ENCODE measurements at regions of chr3 and their contacts with region 1.

Region 1: GRCh38 chr3:100040451-100041225 is 73.7 kb downstream of the FILIP1L start:
- DNase-seq: peak in 1 of 2 donors; percentile 57
- ATAC-seq: peak; percentile 40 to 96 (median 84)
- H3K4me3 ChIP-seq: no peak overlapping the region
- H3K27ac ChIP-seq: peak overlapping the region; percentile 81 to 91 (median 86)
- H3K4me1 ChIP-seq: peaks cover 11 to 58% (median 38%) of the 10 kb centered on the region in 9 donors
- H3K27me3 ChIP-seq: no peaks in the 10 kb centered on the region
- CTCF ChIP-seq: no peak

Region 2: GRCh38 chr3:99938270-99938911 is 102.2 kb before region 1 on chr3:
- intact Hi-C with region 1: loop called in 3 of 10 experiments (anchors 5 to 10 kb)
- DNase-seq: no peak
- ATAC-seq: peak in 1 of 8 donors; percentile 28
- H3K4me3 ChIP-seq: no peak overlapping the region
- H3K27ac ChIP-seq: peak overlapping the region in 7 of 10 donors; percentile 4 to 70 (median 42)
- H3K4me1 ChIP-seq: peaks cover 0 to 62% (median 42%) of the 10 kb centered on the region in 9 donors
- H3K27me3 ChIP-seq: no peaks in the 10 kb centered on the region
- CTCF ChIP-seq: no peak

Region 3: DNA sequence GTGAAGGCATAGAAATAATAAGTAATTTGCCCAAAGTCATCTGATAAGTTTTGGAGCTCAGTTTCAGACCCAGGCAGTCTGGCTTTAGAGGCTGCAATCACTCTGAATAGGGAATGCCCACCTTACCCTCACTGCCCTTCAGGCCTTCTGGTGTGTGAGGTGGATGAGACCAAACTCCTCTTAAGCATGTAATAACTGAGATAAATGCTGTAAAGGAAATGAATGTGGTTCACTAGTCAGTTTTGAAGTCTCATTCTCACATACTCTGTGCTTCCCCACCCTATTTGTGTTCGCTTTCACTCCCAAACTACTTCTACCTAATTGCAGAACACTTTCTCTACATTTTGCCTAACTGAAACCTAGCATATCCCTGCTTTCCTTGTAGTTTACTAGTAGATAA is 70.4 kb before region 1 on chr3:
- intact Hi-C with region 1: no loop called
- DNase-seq: no peak
- ATAC-seq: no peak
- H3K4me3 ChIP-seq: no peak overlapping the region
- H3K27ac ChIP-seq: no peak overlapping the region
- H3K4me1 ChIP-seq: peaks cover 0 to 25% (median 16%) of the 10 kb centered on the region in 9 donors
- H3K27me3 ChIP-seq: no peaks in the 10 kb centered on the region
- CTCF ChIP-seq: no peak

Region 4: DNA sequence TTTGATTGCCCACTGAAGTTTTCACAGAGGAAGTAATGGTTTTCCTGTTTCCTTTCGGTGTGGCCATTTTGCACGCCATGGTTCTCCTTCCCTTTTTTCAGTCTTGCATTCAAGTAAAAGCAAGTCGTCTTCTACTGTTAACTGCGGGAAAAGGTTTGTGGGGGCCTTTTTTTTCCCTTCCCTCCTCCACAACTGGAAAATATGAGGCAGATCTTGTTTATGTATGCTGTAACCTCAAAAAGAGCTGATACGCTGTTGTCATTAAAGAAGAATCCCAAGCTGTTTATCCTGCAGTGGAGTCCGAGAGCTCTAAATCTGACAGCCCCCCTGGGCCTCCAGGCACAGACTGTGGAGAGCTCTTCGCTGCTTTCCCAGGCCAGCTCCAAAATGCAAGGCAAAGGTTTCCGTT is 33.3 kb after region 1 on chr3:
- intact Hi-C with region 1: no loop called
- DNase-seq: peak; percentile 32 to 67
- ATAC-seq: peak in 7 of 8 donors; percentile 50 to 85 (median 72)
- H3K4me3 ChIP-seq: peak overlapping the region in 1 of 10 donors; percentile 15
- H3K27ac ChIP-seq: peak overlapping the region; percentile 24 to 87 (median 66)
- H3K4me1 ChIP-seq: peaks cover 0 to 71% (median 55%) of the 10 kb centered on the region in 9 donors
- H3K27me3 ChIP-seq: no peaks in the 10 kb centered on the region
- CTCF ChIP-seq: no peak

Measured in heart right ventricle (tissue), 16 donors.